CD8-positive, alpha-beta T cell (primary cell): ENCODE measurements at regions of chr20 and their contacts with region 1.

Region 1: GRCh38 chr20:58727292-58727691 is 34.7 kb downstream of the NPEPL1 start:
- DNase-seq: no peak
- ATAC-seq: no peak
- H3K4me3 ChIP-seq: no peak overlapping the region
- H3K4me3 Mint-ChIP-seq: no peak overlapping the region
- H3K27ac ChIP-seq: no peak overlapping the region
- H3K27ac Mint-ChIP-seq: no peak overlapping the region
- H3K4me1 ChIP-seq: no peaks in the 10 kb centered on the region
- H3K4me1 Mint-ChIP-seq: no peaks in the 10 kb centered on the region
- H3K27me3 ChIP-seq: no peaks in the 10 kb centered on the region
- H3K27me3 Mint-ChIP-seq: peaks cover 45% of the 10 kb centered on the region
- CTCF ChIP-seq: no peak

Region 2: DNA sequence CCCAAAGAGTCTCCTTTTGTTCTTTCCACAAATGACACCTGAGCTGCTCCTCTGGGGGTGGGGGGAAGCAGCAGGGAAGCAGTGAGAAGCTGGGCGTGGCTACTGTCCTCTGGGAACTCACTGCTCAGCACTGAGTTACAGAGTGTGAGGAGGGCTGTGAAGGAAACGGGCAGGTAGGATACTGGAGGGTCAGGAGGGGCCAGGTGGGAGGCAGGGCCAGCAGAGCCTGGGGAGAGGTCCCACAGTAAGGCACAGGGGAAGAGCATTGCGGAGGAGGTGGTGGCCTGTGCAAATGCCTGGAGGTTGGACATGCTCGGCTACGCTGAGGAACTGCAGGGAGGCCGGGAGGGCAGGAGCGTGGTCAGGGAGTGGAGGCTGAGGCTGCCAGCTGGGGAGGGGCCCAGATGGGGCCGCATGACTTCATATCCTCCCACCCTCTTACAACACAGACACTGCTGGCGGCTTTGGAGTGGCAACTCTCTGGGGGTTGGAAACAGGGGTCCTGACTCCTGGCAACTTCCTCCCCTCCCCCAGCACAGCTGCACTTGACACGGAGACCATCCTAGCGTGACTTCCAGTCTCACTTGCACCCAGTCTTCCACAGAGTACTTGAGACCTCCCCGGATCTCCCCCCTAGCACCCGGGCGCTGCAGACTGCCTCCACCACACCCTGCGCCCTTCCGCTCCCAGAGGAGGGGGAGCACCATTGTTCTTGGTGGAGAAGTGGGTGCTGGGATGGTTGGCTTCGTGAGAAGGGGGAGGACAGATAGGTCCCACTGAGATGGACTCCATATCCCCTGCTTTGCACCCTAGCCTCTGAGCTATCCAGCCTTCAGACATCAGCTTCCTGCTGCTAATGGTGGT is 1301.9 kb before region 1 on chr20:
- CTCF ChIA-PET with region 1: no interaction called
- POLR2A ChIA-PET with region 1: no interaction called
- intact Hi-C with region 1: no loop called
- DNase-seq: no peak
- ATAC-seq: no peak
- H3K4me3 ChIP-seq: no peak overlapping the region
- H3K4me3 Mint-ChIP-seq: peak overlapping the region; percentile 35
- H3K27ac ChIP-seq: no peak overlapping the region
- H3K27ac Mint-ChIP-seq: peak overlapping the region; percentile 67
- H3K4me1 ChIP-seq: peaks cover 24% of the 10 kb centered on the region
- H3K4me1 Mint-ChIP-seq: peaks cover 41% of the 10 kb centered on the region
- H3K27me3 ChIP-seq: no peaks in the 10 kb centered on the region
- H3K27me3 Mint-ChIP-seq: no peaks in the 10 kb centered on the region
- CTCF ChIP-seq: no peak

Region 3: DNA sequence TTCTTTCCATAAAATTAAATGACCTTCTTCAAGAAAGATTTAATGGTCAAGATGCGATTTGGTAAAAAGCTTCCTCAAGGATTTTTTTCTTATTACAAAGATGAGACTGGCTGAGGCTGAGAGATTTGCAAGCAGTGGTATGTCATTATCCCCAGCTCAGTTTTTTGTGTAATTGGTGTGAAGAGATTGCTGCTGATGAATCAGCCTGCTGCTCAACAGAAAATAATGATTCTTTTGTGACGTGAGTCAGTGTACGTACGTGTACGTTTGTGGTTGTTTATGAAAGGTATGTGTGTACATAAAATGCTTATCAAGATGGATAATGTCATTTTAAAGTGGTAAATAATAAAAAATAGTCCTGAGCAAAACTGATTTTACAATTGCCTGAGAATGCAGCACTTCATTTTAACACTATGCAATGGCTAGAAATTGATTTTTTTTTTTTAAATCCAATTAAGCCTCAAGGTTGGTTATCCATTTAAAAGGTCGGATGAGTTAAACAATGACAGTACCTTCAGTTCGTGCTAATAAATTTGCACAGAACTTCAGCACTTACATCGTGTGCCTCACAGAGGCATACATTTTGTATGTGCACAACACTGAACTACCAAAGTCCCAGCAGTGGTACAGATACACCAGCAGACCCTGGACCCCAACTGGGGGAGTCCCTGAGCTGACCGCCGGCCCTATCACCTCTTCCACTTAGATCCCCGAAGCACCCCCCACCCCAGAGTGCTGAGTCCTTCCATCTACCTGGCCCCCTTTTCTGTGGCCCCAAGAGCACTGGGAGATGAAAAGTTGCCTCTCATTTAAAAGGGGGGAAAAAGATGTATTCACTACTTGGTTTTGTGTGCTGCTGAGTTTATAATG is 44.4 kb before region 1 on chr20:
- CTCF ChIA-PET with region 1: no interaction called
- POLR2A ChIA-PET with region 1: no interaction called
- intact Hi-C with region 1: loop called in 1 of 2 experiments (anchors 1 kb)
- DNase-seq: no peak
- ATAC-seq: no peak
- H3K4me3 ChIP-seq: no peak overlapping the region
- H3K4me3 Mint-ChIP-seq: no peak overlapping the region
- H3K27ac ChIP-seq: no peak overlapping the region
- H3K27ac Mint-ChIP-seq: no peak overlapping the region
- H3K4me1 ChIP-seq: no peaks in the 10 kb centered on the region
- H3K4me1 Mint-ChIP-seq: no peaks in the 10 kb centered on the region
- H3K27me3 ChIP-seq: no peaks in the 10 kb centered on the region
- H3K27me3 Mint-ChIP-seq: no peaks in the 10 kb centered on the region
- CTCF ChIP-seq: no peak